A673 (cell line): ENCODE measurements at regions of chr16 and their contacts with region 1.

Region 1: DNA sequence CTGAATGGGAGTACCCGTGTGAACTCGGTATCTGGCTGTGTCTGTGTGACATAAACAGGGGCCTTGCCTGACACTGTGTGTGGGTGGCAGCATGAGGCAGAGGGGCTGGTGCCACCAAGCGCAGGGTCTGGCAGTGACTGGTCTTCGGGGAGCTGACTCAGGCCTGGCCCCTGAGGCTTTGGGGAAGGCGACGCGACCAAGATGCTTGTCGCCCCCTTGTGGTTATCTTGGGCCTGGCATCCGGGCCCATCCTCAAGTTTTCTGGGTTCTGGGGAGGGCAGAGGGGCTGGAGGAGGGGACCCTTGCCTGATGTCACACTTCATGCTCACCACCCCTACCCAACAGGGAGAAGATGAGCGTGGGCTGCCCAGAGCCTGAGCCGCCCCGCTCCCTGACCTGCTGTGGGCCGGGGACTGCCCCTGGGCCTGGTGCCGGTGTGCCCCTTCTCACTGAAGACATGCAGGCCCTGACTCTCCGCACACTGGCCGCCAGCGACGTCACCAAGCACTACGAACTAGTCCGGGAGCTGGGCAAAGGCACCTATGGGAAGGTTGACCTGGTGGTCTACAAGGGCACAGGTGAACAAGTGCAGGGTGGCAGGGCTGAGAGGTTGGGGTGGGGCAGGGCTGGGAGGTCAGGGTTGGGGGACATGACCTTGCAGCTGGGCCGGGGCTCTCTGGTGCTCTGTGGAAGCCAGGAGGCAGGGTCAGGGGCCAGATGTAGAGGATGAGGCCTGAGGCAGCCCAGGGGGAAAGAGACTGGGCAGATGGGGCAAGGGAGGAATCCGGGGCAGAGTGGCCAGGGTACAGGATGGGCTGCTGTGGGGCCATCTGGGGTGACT is 24.9 kb downstream of the SBK1 start:
- DNase-seq: peak; percentile 69
- H3K4me3 ChIP-seq: no peak overlapping the region
- H3K27ac ChIP-seq: no peak overlapping the region
- H3K4me1 ChIP-seq: no peaks in the 10 kb centered on the region
- H3K27me3 ChIP-seq: no peaks in the 10 kb centered on the region
- CTCF ChIP-seq: peak; percentile 91

Region 2: DNA sequence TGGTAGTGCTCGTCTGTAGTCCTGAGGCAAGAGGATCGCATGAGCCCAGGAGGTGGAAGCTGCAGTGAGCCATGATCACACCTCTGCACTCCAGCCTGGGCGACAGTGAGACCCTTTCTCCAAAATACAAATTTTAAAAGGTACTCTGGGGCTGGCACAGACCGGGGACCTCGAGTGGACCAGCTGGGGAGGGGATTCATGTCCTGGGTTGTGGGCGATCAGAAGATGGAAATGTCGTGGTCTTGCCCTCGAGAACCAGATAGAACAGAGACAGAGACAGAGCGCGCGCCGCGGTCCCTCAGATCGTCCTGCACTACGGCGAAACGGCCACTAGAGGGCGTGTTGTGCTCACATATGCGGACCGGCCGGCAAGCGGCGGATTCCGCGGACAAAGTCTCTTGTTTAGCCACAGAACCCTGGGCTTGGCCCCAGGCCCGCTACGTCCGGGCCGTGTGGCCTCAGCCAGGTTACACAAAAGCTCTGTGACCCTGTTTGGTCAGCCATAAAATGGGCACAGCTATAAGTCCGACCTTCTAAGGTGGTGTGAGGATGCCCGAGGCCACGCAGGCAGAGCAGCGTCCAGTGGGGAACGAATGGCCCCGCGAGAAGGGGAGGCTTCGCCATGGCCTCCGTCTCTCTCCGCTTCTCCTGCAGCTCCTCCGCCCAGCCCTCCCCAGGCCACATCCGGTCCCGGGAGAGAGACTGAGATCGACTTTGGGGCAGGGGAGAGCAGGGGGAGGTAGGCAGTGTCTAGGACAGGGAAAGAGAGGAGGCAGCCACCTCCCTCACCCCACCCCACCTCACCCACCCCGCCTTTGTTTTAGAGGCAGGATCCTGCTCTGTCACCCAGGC is 39.5 kb before region 1 on chr16:
- CTCF ChIA-PET with region 1: interaction called, 12 read pairs
- POLR2A ChIA-PET with region 1: interaction called, 4 read pairs
- intact Hi-C with region 1: loop called (anchors 1 kb)
- DNase-seq: peak; percentile 77
- H3K4me3 ChIP-seq: peak overlapping the region; percentile 42
- H3K27ac ChIP-seq: no peak overlapping the region
- H3K4me1 ChIP-seq: no peaks in the 10 kb centered on the region
- H3K27me3 ChIP-seq: no peaks in the 10 kb centered on the region
- CTCF ChIP-seq: peak; percentile 93